ENCODE measurements at regions of chr2 and their contacts with region 1.

Region 1: DNA sequence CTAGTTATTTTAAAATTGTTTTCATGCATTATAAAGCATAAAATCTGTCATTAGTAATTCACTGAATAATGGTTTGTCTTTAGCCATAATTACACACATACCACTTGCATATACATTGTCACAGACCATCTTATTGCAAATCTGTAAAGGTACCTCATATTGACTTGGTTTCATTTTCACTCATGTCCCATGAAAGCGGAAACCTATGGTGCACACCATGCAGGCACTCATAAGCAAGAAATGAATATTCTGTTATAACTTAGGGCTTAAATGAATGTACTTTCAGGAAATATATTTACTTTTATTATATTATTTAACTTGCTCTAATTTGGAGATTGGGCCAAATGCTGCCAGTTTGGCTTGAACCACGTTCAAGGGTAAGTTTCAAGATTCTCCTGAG is 29.2 kb upstream of the STK17B start:
- DNase-seq: peak; percentile 34
- H3K4me3 Mint-ChIP-seq: peak overlapping the region; percentile 26
- H3K27ac Mint-ChIP-seq: peak overlapping the region; percentile 75
- H3K4me1 Mint-ChIP-seq: peaks cover 44% of the 10 kb centered on the region
- H3K27me3 Mint-ChIP-seq: no peaks in the 10 kb centered on the region

Region 2: GRCh38 chr2:196171248-196171871 is 29.2 kb before region 1 on chr2 and contains the start of gene STK17B:
- intact Hi-C with region 1: loop called (anchors 1 kb)
- DNase-seq: peak; percentile 94
- H3K4me3 Mint-ChIP-seq: peak within 1 kb of the TSS; percentile 96
- H3K27ac Mint-ChIP-seq: peak within 1 kb of the TSS; percentile 93
- H3K4me1 Mint-ChIP-seq: peaks cover 44% of the 10 kb centered on the region
- H3K27me3 Mint-ChIP-seq: no peaks in the 10 kb centered on the region
- total RNA-seq, gene STK17B: 176 and 178 TPM in 2 replicates

Region 3: GRCh38 chr2:196182439-196183171 is 18.0 kb before region 1 on chr2:
- intact Hi-C with region 1: loop called (anchors 1 kb)
- DNase-seq: no peak
- H3K4me3 Mint-ChIP-seq: peak overlapping the region; percentile 74
- H3K27ac Mint-ChIP-seq: peak overlapping the region; percentile 96
- H3K4me1 Mint-ChIP-seq: peaks cover 68% of the 10 kb centered on the region
- H3K27me3 Mint-ChIP-seq: no peaks in the 10 kb centered on the region

Region 4: GRCh38 chr2:196249860-196250259 is 49.3 kb after region 1 on chr2:
- intact Hi-C with region 1: no loop called
- DNase-seq: no peak
- H3K4me3 Mint-ChIP-seq: no peak overlapping the region
- H3K27ac Mint-ChIP-seq: peak overlapping the region; percentile 50
- H3K4me1 Mint-ChIP-seq: peaks cover 62% of the 10 kb centered on the region
- H3K27me3 Mint-ChIP-seq: no peaks in the 10 kb centered on the region

Region 5: GRCh38 chr2:196309691-196310090 is 109.1 kb after region 1 on chr2:
- intact Hi-C with region 1: no loop called
- DNase-seq: no peak
- H3K4me3 Mint-ChIP-seq: no peak overlapping the region
- H3K27ac Mint-ChIP-seq: no peak overlapping the region
- H3K4me1 Mint-ChIP-seq: peaks cover 8% of the 10 kb centered on the region
- H3K27me3 Mint-ChIP-seq: peaks cover 16% of the 10 kb centered on the region